ENCODE measurements at regions of chr12 and their contacts with region 1.

Region 1: GRCh38 chr12:56117778-56118687 is at the start of gene ZC3H10:
- DNase-seq: peak; percentile 96 to 99 (median 98)
- H3K4me3 ChIP-seq: peak within 1 kb of the TSS; percentile 99
- H3K4me3 Mint-ChIP-seq: peak within 1 kb of the TSS; percentile 95 to 99 (median 98)
- H3K27ac ChIP-seq: peak within 1 kb of the TSS; percentile 89
- H3K27ac Mint-ChIP-seq: peak within 1 kb of the TSS; percentile 94 to 100 (median 99)
- H3K4me1 ChIP-seq: peaks cover 34% of the 10 kb centered on the region
- H3K4me1 Mint-ChIP-seq: peaks cover 22 to 44% (median 31%) of the 10 kb centered on the region in 4 donors
- H3K27me3 ChIP-seq: no peaks in the 10 kb centered on the region
- H3K27me3 Mint-ChIP-seq: no peaks in the 10 kb centered on the region
- total RNA-seq, gene ZC3H10: 16.3 to 19.6 TPM

Region 2: GRCh38 chr12:55817346-55818139 is 300.5 kb before region 1 on chr12 and contains the starts of genes ORMDL2 and SARNP:
- CTCF ChIA-PET with region 1: no interaction called
- POLR2A ChIA-PET with region 1: interaction called, 13 read pairs
- intact Hi-C with region 1: loop called (anchors 1 kb)
- DNase-seq: peak; percentile 95 to 100 (median 99)
- H3K4me3 ChIP-seq: peak within 1 kb of the TSS; percentile 76 to 96
- H3K4me3 Mint-ChIP-seq: no peak within 1 kb of the TSS
- H3K27ac ChIP-seq: peak within 1 kb of the TSS; percentile 88
- H3K27ac Mint-ChIP-seq: no peak within 1 kb of the TSS
- H3K4me1 ChIP-seq: peaks cover 51% of the 10 kb centered on the region
- H3K4me1 Mint-ChIP-seq: peaks cover 23 to 36% (median 25%) of the 10 kb centered on the region in 4 donors
- H3K27me3 ChIP-seq: no peaks in the 10 kb centered on the region
- H3K27me3 Mint-ChIP-seq: no peaks in the 10 kb centered on the region
- total RNA-seq, gene ORMDL2: 42.6 to 44.4 TPM
- total RNA-seq, gene SARNP: 47.7 to 49.4 TPM

Region 3: DNA sequence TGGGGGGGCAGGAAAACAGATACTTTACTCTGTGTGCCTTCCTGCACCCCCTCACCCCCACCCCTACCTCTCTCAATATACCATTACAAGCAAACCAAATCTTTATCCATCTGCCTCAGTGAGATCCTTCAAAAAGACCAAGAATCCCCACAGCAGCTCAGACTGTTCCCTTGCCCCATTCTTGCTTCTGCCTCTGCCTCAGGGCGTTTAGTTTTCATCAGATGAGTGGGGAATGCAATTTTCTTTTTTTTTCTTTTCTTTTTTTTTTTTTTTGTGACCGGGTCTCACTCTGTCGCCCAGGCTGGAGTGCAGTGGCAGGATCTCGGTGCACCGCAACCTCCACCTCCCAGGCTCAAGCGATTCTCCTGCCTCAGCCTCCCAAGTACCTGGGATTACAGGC is 101.9 kb before region 1 on chr12:
- CTCF ChIA-PET with region 1: no interaction called
- POLR2A ChIA-PET with region 1: no interaction called
- intact Hi-C with region 1: no loop called
- DNase-seq: no peak
- H3K4me3 ChIP-seq: no peak overlapping the region
- H3K4me3 Mint-ChIP-seq: no peak overlapping the region
- H3K27ac ChIP-seq: no peak overlapping the region
- H3K27ac Mint-ChIP-seq: no peak overlapping the region
- H3K4me1 ChIP-seq: peaks cover 16% of the 10 kb centered on the region
- H3K4me1 Mint-ChIP-seq: peaks cover 3 to 15% (median 10%) of the 10 kb centered on the region in 4 donors
- H3K27me3 ChIP-seq: no peaks in the 10 kb centered on the region
- H3K27me3 Mint-ChIP-seq: no peaks in the 10 kb centered on the region

Region 4: DNA sequence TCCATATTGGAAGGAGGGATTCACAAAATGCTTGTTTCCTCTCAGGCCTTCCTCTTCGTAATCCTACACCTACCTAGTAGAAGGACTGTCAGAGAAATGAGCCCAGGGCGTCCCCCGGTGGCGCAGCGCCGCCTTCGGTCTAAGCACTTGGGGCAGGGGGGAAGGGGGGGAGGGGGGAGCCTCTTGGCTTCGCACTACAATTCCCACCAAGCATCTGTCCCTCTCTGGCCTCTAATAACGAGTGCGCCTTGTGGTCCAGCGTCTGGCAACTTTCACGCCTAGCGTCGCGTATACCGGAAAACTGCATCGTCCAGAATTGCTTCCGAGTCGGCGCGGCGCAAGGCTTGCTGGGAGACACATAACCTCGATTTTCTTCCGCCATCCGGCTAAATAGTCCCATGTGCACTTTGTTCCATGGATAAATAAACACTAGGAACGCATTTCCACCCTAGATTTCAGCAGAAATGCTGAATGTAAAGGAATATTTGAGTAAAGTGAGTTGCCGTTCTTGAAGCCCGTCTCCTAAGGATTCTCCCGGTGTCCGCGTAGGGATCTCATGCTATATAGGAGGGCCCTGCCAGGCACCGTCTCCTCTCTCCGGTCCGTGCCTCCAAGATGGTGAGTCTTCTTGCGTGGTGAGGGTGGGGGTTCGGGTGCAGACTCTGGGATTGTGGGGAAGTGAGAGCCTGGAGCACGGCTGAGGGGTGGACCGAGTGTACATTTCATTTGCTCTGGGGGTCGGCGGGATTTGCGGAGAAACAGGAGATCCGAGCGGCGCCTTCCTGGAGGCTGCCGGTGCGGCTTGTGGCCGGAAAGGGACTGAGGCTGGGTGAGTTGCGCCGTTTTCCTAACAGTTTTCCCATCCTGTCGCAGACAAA is 76.2 kb before region 1 on chr12 and contains the start of gene RPS26:
- CTCF ChIA-PET with region 1: interaction called, 41 read pairs
- POLR2A ChIA-PET with region 1: interaction called, 55 read pairs
- intact Hi-C with region 1: loop called (anchors 1 kb)
- DNase-seq: peak; percentile 95 to 98 (median 96)
- H3K4me3 ChIP-seq: peak within 1 kb of the TSS; percentile 94 to 97
- H3K4me3 Mint-ChIP-seq: peak within 1 kb of the TSS; percentile 98 to 100 (median 99)
- H3K27ac ChIP-seq: peak within 1 kb of the TSS; percentile 87
- H3K27ac Mint-ChIP-seq: peak within 1 kb of the TSS; percentile 96 to 100 (median 99)
- H3K4me1 ChIP-seq: peaks cover 23% of the 10 kb centered on the region
- H3K4me1 Mint-ChIP-seq: peaks cover 15 to 45% (median 23%) of the 10 kb centered on the region in 4 donors
- H3K27me3 ChIP-seq: no peaks in the 10 kb centered on the region
- H3K27me3 Mint-ChIP-seq: no peaks in the 10 kb centered on the region
- total RNA-seq, gene RPS26: 55.6 to 55.8 TPM

Region 5: GRCh38 chr12:56137853-56138571 is 20.0 kb after region 1 on chr12:
- CTCF ChIA-PET with region 1: interaction called, 9 read pairs
- POLR2A ChIA-PET with region 1: interaction called, 16 read pairs
- intact Hi-C with region 1: no loop called
- DNase-seq: no peak
- H3K4me3 ChIP-seq: no peak overlapping the region
- H3K4me3 Mint-ChIP-seq: peak overlapping the region in 7 of 8 donors; percentile 19 to 84 (median 74)
- H3K27ac ChIP-seq: peak overlapping the region; percentile 22
- H3K27ac Mint-ChIP-seq: peak overlapping the region; percentile 77 to 90 (median 86)
- H3K4me1 ChIP-seq: peaks cover 74% of the 10 kb centered on the region
- H3K4me1 Mint-ChIP-seq: peaks cover 41 to 72% (median 54%) of the 10 kb centered on the region in 4 donors
- H3K27me3 ChIP-seq: no peaks in the 10 kb centered on the region
- H3K27me3 Mint-ChIP-seq: no peaks in the 10 kb centered on the region

Region 6: GRCh38 chr12:56189176-56189917 is 71.3 kb after region 1 on chr12 and contains the start of gene SMARCC2:
- CTCF ChIA-PET with region 1: interaction called, 264 read pairs
- POLR2A ChIA-PET with region 1: interaction called, 245 read pairs
- intact Hi-C with region 1: loop called (anchors 1 kb)
- DNase-seq: peak; percentile 84 to 88 (median 85)
- H3K4me3 ChIP-seq: peak within 1 kb of the TSS; percentile 87 to 93
- H3K4me3 Mint-ChIP-seq: peak within 1 kb of the TSS; percentile 94 to 98 (median 96)
- H3K27ac ChIP-seq: peak within 1 kb of the TSS; percentile 91
- H3K27ac Mint-ChIP-seq: peak within 1 kb of the TSS; percentile 97 to 100 (median 98)
- H3K4me1 ChIP-seq: peaks cover 24% of the 10 kb centered on the region
- H3K4me1 Mint-ChIP-seq: peaks cover 27 to 54% (median 43%) of the 10 kb centered on the region in 4 donors
- H3K27me3 ChIP-seq: no peaks in the 10 kb centered on the region
- H3K27me3 Mint-ChIP-seq: peaks cover 0 to 2% of the 10 kb centered on the region in 2 donors
- total RNA-seq, gene SMARCC2: 192 to 199 TPM

Region 7: GRCh38 chr12:56315622-56316473 is 197.8 kb after region 1 on chr12 and contains the start of gene CNPY2:
- CTCF ChIA-PET with region 1: interaction called, 5 read pairs
- POLR2A ChIA-PET with region 1: interaction called, 7 read pairs
- intact Hi-C with region 1: loop called (anchors 2 kb)
- DNase-seq: peak; percentile 93 to 97 (median 95)
- H3K4me3 ChIP-seq: peak within 1 kb of the TSS; percentile 99 to 100
- H3K4me3 Mint-ChIP-seq: peak within 1 kb of the TSS; percentile 97 to 100 (median 98)
- H3K27ac ChIP-seq: peak within 1 kb of the TSS; percentile 95
- H3K27ac Mint-ChIP-seq: peak within 1 kb of the TSS; percentile 98 to 100 (median 99)
- H3K4me1 ChIP-seq: peaks cover 18% of the 10 kb centered on the region
- H3K4me1 Mint-ChIP-seq: peaks cover 1 to 25% (median 13%) of the 10 kb centered on the region in 4 donors
- H3K27me3 ChIP-seq: no peaks in the 10 kb centered on the region
- H3K27me3 Mint-ChIP-seq: no peaks in the 10 kb centered on the region
- total RNA-seq, gene CNPY2: 93.5 to 95.8 TPM

Region 8: DNA sequence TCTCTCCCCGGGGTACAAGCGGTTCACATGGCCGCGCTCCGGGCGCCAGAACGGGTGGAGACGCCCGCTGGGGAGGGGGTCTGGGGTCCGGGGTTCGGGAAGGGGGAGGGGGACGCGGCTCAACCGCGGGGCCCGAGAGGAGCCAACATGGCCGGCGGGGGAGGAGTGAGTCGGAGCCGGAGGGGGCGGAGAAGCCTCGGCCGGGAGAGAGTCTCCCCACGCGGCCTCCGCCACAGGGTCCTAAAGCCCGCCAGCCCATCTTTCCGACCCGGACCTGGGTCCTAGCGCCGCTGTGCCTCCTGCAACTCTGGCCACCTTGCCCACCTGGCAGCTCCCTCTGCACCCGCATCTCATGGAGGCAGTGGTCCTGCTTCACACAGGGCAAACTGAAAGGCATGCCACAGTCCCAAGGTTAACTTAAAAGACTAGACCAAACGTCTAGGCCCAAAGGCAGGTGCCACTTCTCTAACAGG is 512.2 kb after region 1 on chr12 and contains the start of gene BAZ2A:
- CTCF ChIA-PET with region 1: no interaction called
- POLR2A ChIA-PET with region 1: interaction called, 10 read pairs
- intact Hi-C with region 1: loop called (anchors 5 kb)
- DNase-seq: peak; percentile 80 to 86 (median 83)
- H3K4me3 ChIP-seq: peak within 1 kb of the TSS; percentile 90 to 98
- H3K4me3 Mint-ChIP-seq: peak within 1 kb of the TSS; percentile 86 to 99 (median 92)
- H3K27ac ChIP-seq: peak within 1 kb of the TSS; percentile 93
- H3K27ac Mint-ChIP-seq: peak within 1 kb of the TSS; percentile 82 to 98 (median 94)
- H3K4me1 ChIP-seq: peaks cover 76% of the 10 kb centered on the region
- H3K4me1 Mint-ChIP-seq: peaks cover 43 to 81% (median 63%) of the 10 kb centered on the region in 4 donors
- H3K27me3 ChIP-seq: no peaks in the 10 kb centered on the region
- H3K27me3 Mint-ChIP-seq: no peaks in the 10 kb centered on the region
- total RNA-seq, gene BAZ2A: 206 to 212 TPM

Measured in CD4-positive, alpha-beta memory T cell (primary cell).